Caco-2 (cell line): ENCODE measurements at regions of chr12 and their contacts with region 1.

Region 1: DNA sequence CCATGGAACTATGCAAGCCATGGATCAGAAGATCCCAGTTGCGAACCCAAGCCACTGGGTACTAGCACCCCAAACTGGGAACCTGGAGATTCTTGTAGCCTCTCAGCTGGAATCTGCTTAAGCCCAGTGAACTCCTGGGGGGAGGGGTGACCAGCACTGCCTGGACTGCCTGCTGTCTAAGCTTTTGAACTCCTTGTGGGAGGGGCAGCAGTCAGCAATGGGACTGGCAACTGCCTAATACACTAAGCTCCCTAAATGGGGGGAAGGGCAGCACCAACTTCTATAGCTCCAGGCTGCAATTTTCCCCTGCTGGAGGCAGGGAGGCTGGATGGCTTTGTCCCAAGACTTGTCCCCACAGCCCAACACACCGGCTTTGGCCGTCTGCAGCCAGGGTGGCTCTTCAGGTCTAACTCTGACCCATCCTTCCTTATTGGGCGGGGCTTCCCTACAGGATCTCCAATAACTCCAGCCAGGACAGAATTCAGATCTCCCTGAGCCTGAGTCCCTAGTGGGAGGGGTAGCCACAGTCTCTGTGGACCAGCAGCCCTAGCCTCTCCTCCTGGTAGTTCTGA is 485.1 kb downstream of the SOX5 start:
- DNase-seq: peak in 1 of 2 experiments; percentile 37
- H3K4me3 ChIP-seq: no peak overlapping the region
- H3K4me3 Mint-ChIP-seq: no peak overlapping the region
- H3K27ac Mint-ChIP-seq: no peak overlapping the region
- H3K4me1 ChIP-seq: no peaks in the 10 kb centered on the region
- H3K4me1 Mint-ChIP-seq: no peaks in the 10 kb centered on the region
- H3K27me3 ChIP-seq: no peaks in the 10 kb centered on the region
- H3K27me3 Mint-ChIP-seq: no peaks in the 10 kb centered on the region
- CTCF ChIP-seq: no peak

Region 2: DNA sequence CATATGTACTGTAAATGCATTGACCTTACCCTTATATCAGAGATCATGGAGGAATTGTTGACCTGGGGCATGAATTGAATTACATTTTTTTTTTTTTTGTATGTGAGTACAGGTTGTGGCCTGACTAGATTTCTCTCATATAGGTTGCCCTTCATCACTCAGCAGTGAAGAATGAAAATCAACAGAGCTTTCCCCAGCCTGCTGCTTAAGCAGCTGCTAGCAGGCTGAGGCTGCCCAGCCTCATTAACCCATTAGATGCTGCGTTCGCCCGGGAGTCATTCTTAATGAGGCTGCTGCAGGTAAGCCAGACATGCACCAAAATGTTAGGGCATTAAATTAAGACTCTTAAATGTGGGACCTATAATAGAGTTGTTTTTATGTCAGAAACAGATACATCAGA is 603.4 kb before region 1 on chr12:
- CTCF ChIA-PET with region 1: no interaction called
- POLR2A ChIA-PET with region 1: no interaction called
- intact Hi-C with region 1: no loop called
- DNase-seq: no peak
- H3K4me3 ChIP-seq: no peak overlapping the region
- H3K4me3 Mint-ChIP-seq: no peak overlapping the region
- H3K27ac Mint-ChIP-seq: no peak overlapping the region
- H3K4me1 ChIP-seq: peaks cover 6% of the 10 kb centered on the region; the same call in 1 of the 2 replicates
- H3K4me1 Mint-ChIP-seq: peaks cover 16% of the 10 kb centered on the region
- H3K27me3 ChIP-seq: no peaks in the 10 kb centered on the region
- H3K27me3 Mint-ChIP-seq: peaks cover 14% of the 10 kb centered on the region
- CTCF ChIP-seq: no peak

Region 3: DNA sequence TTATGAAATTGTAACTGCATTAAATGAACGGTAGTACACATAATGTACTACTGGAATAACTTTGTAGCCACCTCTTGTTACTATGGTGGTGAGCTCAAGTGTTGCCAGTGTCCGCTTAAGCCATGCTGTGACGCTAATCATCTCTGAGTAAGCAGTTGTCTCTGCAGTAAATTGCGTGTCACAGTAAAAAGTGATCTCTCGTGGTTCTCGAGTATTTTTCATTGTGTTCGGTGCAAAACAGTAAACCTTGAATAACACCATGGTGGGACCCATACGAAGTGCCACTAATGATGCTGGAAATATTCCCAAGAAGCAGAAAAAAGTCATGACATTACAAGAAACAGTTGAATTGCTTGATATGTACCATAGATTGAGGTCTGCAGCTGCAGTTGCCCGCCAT is 39.6 kb before region 1 on chr12:
- CTCF ChIA-PET with region 1: no interaction called
- POLR2A ChIA-PET with region 1: no interaction called
- intact Hi-C with region 1: loop called (anchors 5 kb)
- DNase-seq: no peak
- H3K4me3 ChIP-seq: no peak overlapping the region
- H3K4me3 Mint-ChIP-seq: no peak overlapping the region
- H3K27ac Mint-ChIP-seq: no peak overlapping the region
- H3K4me1 ChIP-seq: no peaks in the 10 kb centered on the region
- H3K4me1 Mint-ChIP-seq: peaks cover 7% of the 10 kb centered on the region
- H3K27me3 ChIP-seq: no peaks in the 10 kb centered on the region
- H3K27me3 Mint-ChIP-seq: peaks cover 15% of the 10 kb centered on the region
- CTCF ChIP-seq: no peak